Activated B cell treated with CpG ODN at 0.5 μM for 24 hours (primary cell): ENCODE measurements at regions of chr6 and their contacts with region 1.

Region 1: DNA sequence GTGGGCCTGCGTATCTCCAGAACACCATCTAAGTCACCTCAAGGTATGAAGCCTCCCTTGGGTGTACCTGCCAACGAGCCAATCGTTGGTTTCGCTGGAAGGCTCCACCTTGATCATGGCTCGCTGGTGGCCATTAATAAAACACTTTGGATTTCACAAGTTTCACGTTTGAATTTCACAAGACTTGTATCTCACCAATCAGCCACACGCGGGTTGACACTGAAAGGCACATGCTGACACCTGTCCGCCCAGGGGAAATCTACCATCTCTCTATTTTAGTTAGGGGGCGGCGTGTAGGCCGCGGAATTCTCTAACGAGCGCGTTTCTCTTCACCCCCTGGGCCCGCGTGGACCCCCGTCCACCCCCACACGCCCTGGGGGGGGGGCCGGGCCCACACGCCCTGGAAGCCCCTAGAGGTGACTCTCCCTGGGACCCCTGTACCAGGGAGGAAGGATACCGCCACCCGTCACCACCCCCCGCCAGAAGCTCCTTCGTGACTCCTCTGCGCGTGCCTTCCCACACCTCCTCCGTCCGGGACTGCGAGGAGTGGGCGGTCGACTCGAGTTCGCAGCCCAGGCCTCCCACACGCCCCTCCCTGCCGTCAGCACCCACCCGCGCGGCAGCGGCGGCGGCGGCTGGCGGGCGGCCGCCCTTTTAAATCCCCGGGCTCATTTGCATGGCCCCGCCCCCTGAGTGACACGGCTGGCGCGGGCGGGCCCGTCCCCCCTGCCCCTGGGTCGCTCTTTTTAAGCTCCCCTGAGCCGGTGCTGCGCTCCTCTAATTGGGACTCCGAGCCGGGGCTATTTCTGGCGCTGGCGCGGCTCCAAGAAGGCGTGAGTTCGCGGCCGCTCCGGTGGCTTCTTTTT is at the start of gene HMGA1:
- DNase-seq: peak; percentile 90
- ATAC-seq: peak; percentile 77
- H3K4me3 Mint-ChIP-seq: peak within 1 kb of the TSS; percentile 89
- H3K27ac Mint-ChIP-seq: peak within 1 kb of the TSS; percentile 95
- H3K4me1 Mint-ChIP-seq: peaks cover 36% of the 10 kb centered on the region
- H3K27me3 Mint-ChIP-seq: no peaks in the 10 kb centered on the region
- CTCF ChIP-seq: no peak
- total RNA-seq, gene HMGA1: 186 and 188 TPM in 2 replicates

Region 2: DNA sequence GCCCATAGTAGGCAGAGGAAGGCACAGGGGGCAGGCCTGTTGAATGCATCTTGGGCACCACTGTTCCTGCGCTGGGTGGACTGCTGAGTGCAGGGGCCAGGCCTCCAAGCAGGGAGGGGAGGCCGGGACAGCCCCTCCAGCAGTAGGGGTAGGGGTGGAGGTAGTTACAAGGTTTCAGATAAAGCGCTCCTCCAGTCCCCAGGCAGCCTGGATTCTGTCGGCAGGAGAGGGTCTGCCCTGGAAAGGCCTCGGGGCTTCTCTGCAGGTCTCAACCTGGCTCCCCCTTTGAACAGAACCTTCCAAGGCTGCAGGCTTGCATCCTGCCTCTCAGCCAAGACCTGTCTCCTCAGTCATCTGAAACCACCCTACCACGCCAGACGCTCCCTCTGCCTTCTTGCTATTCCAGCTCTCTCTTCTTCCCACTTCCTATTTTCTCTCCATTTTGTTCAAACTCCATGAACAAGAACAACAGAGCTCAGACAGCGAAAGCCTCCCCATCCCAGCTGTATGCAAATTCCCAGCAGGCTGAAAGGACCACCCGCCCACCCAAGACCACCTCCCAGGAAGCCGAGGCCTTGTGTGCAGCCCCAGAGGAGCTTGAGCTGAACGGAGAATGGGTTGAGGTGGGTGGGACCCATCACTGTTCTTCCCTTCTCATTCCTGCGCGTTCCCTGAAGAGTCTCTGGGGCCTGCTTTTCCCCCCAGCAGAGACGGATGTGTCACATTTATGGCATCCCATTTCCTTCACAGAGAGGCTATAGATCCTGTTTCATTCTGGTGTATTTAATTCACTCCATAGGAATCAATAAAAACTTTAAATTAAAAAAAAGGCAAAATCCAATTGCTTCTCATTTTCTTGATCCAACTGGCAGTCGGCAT is 433.9 kb before region 1 on chr6:
- CTCF ChIA-PET with region 1: no interaction called
- POLR2A ChIA-PET with region 1: no interaction called
- intact Hi-C with region 1: no loop called
- DNase-seq: no peak
- ATAC-seq: no peak
- H3K4me3 Mint-ChIP-seq: no peak overlapping the region
- H3K27ac Mint-ChIP-seq: no peak overlapping the region
- H3K4me1 Mint-ChIP-seq: peaks cover 2% of the 10 kb centered on the region
- H3K27me3 Mint-ChIP-seq: peaks cover 36% of the 10 kb centered on the region
- CTCF ChIP-seq: no peak

Region 3: GRCh38 chr6:34189806-34190503 is 46.4 kb before region 1 on chr6:
- CTCF ChIA-PET with region 1: interaction called, 3 read pairs
- POLR2A ChIA-PET with region 1: interaction called, 57 read pairs
- intact Hi-C with region 1: no loop called
- DNase-seq: peak; percentile 37
- ATAC-seq: peak; percentile 94
- H3K4me3 Mint-ChIP-seq: peak overlapping the region; percentile 19
- H3K27ac Mint-ChIP-seq: peak overlapping the region; percentile 30
- H3K4me1 Mint-ChIP-seq: peaks cover 11% of the 10 kb centered on the region
- H3K27me3 Mint-ChIP-seq: no peaks in the 10 kb centered on the region
- CTCF ChIP-seq: no peak

Region 4: DNA sequence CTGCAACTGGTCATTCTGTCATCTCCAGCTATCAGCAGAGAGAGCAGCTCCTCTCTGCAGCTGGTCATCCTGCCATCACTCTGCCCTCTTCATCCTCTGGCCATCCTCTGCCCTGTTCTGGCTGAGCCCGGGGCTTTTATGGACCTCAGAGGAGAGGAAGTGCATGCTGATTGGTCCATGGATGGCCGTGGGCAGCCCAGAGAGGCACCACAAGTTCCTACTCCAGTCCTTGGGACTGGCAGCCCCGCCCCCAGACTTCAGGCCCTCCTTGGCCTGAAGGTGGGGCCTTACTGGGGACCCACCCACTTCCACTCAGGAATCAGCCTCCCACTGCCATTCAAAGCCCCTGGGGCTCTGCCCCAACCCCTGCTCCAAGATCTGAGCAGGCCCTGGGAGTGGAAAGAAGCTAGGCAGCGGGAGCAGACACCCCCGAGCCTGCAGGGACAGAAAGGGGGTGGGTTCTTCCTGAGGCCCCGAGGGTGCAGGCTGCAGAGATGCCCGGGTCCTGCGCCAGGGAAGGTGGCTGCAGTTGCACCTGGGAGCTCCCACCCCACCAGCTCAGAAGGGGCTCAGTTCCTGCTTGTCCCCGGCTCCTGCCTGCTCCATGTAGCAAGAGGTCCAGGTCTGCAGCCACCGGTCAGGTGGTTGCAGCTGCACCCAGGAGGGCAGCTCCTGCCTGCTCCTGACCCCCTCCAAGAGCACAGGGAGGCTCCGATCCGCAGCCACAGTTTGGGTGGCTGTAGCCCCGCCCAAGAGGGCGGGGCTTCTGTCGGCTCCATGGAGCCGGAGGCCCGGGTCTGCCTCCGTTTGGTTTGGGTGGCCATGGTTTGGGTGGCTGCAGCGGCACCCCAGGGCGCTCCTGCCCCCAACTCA is 33.8 kb before region 1 on chr6:
- CTCF ChIA-PET with region 1: no interaction called
- POLR2A ChIA-PET with region 1: interaction called, 57 read pairs
- intact Hi-C with region 1: no loop called
- DNase-seq: no peak
- ATAC-seq: no peak
- H3K4me3 Mint-ChIP-seq: no peak overlapping the region
- H3K27ac Mint-ChIP-seq: no peak overlapping the region
- H3K4me1 Mint-ChIP-seq: no peaks in the 10 kb centered on the region
- H3K27me3 Mint-ChIP-seq: no peaks in the 10 kb centered on the region
- CTCF ChIP-seq: no peak

Region 5: DNA sequence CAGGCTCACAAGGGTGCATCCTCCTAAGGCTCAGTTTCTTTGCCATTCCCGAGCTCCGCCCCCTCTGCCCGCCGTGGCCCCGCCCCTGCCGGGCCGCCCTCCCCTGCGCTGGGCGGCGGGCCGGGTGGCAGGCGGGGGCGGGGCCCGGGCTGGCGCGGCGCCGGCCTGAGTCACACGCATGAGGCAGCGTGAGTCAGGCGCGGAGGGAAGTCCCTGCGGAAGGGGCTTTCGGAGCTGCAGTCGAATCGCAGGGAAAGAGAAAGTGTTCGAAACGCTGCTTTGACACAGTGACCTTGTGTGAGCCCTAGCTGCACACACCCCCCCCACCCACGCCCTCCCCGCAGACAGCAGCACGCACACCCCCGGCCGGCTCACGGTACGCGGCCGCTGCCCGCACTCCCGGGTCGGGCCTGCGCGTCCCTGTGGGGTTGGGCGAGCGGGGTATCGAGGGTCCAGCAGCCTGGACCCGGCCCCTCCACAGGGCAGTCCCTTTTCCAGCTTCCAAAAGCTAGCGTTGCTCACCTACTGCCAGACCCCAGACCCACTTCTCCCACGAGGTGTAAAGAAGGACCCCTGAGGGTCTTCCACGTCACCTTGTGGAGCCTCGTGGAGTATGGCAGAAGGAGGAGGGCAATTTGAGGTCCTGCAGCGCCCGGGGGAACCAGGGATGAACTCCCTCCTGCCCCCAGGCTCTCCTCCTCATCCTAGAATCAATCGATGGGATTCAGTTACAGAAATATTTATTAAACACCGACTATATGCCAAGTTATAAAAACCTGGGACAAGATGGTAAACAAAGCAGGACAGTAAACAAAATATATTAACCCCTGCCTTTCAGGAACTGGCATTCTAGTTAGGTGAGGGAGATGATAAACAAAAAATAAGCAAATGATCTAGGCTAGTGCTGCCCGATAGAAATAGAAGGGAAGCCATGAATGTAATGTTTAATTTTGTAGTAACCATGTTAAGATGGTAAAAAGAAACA is 12.1 kb before region 1 on chr6:
- CTCF ChIA-PET with region 1: interaction called, 9 read pairs
- POLR2A ChIA-PET with region 1: interaction called, 297 read pairs
- intact Hi-C with region 1: loop called (anchors 1 kb)
- DNase-seq: peak; percentile 94
- ATAC-seq: peak; percentile 94
- H3K4me3 Mint-ChIP-seq: peak overlapping the region; percentile 68
- H3K27ac Mint-ChIP-seq: peak overlapping the region; percentile 87
- H3K4me1 Mint-ChIP-seq: peaks cover 64% of the 10 kb centered on the region
- H3K27me3 Mint-ChIP-seq: no peaks in the 10 kb centered on the region
- CTCF ChIP-seq: no peak

Region 6: GRCh38 chr6:34425498-34426410 is 189.4 kb after region 1 on chr6 and contains the start of gene RPS10:
- CTCF ChIA-PET with region 1: no interaction called
- POLR2A ChIA-PET with region 1: interaction called, 16 read pairs
- intact Hi-C with region 1: no loop called
- DNase-seq: peak; percentile 97
- ATAC-seq: peak; percentile 99
- H3K4me3 Mint-ChIP-seq: peak within 1 kb of the TSS; percentile 97
- H3K27ac Mint-ChIP-seq: peak within 1 kb of the TSS; percentile 97
- H3K4me1 Mint-ChIP-seq: peaks cover 29% of the 10 kb centered on the region
- H3K27me3 Mint-ChIP-seq: no peaks in the 10 kb centered on the region
- CTCF ChIP-seq: no peak
- total RNA-seq, gene RPS10: 2,903 and 3,402 TPM in 2 replicates

Region 7: GRCh38 chr6:34575326-34575725 is 339.0 kb after region 1 on chr6:
- CTCF ChIA-PET with region 1: no interaction called
- POLR2A ChIA-PET with region 1: no interaction called
- intact Hi-C with region 1: no loop called
- DNase-seq: no peak
- ATAC-seq: no peak
- H3K4me3 Mint-ChIP-seq: no peak overlapping the region
- H3K27ac Mint-ChIP-seq: no peak overlapping the region
- H3K4me1 Mint-ChIP-seq: no peaks in the 10 kb centered on the region
- H3K27me3 Mint-ChIP-seq: no peaks in the 10 kb centered on the region
- CTCF ChIP-seq: no peak